ENCODE measurements at regions of chr1 and their contacts with region 1.

Region 1: DNA sequence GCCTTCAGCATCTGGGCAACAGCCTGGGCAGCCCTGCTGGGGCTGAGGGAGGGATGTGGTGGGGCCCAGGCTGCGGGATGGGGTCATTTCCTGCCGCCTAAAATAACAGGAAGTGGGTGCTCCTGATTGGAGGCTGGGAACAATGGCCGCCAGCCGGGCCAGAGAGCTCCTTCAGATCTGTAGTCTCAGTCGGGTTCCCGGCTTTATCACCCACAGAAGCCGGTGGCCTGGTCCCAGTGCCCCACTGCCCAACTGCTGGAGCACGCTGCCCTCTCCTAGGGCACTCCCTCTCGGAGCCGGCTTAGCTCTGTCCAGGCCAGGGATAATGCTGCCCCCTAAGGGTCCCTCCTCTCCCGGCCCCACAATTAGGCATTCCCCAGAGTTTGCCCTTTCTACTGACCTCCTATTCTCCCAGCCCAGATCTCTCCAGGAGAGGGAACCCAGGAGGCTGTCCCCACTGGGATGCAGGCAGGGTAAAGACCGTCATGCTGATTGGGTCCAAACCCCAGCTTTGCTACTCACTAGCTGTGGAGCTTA is 5.1 kb downstream of the MAP7D1 start:
- DNase-seq: peak; percentile 41 to 85 (median 64)
- ATAC-seq: peak; percentile 25
- H3K4me3 ChIP-seq: peak overlapping the region; percentile 61
- H3K4me3 Mint-ChIP-seq: peak overlapping the region; percentile 88
- H3K27ac ChIP-seq: peak overlapping the region; percentile 91 to 93
- H3K27ac Mint-ChIP-seq: peak overlapping the region; percentile 97
- H3K4me1 ChIP-seq: peaks cover 79% of the 10 kb centered on the region
- H3K4me1 Mint-ChIP-seq: peaks cover 72% of the 10 kb centered on the region
- H3K27me3 ChIP-seq: no peaks in the 10 kb centered on the region
- H3K27me3 Mint-ChIP-seq: no peaks in the 10 kb centered on the region
- CTCF ChIP-seq: no peak

Region 2: GRCh38 chr1:36175137-36176095 is 14.4 kb after region 1 on chr1:
- CTCF ChIA-PET with region 1: no interaction called
- POLR2A ChIA-PET with region 1: interaction called, 12 read pairs
- intact Hi-C with region 1: loop called (anchors 2 kb)
- DNase-seq: peak in 3 of 14 experiments; percentile 18 to 42 (median 38)
- ATAC-seq: no peak
- H3K4me3 ChIP-seq: no peak overlapping the region
- H3K4me3 Mint-ChIP-seq: no peak overlapping the region
- H3K27ac ChIP-seq: peak overlapping the region; percentile 14 to 29
- H3K27ac Mint-ChIP-seq: peak overlapping the region; percentile 9
- H3K4me1 ChIP-seq: peaks cover 4% of the 10 kb centered on the region
- H3K4me1 Mint-ChIP-seq: peaks cover 10% of the 10 kb centered on the region
- H3K27me3 ChIP-seq: no peaks in the 10 kb centered on the region
- H3K27me3 Mint-ChIP-seq: no peaks in the 10 kb centered on the region
- CTCF ChIP-seq: no peak